ENCODE measurements at regions of chr4 and their contacts with region 1.

Region 1: GRCh38 chr4:136713140-136713539 is 819.2 kb downstream of the PCDH18 start:
- DNase-seq: no peak
- ATAC-seq: peak in 1 of 8 donors; percentile 50
- H3K4me3 ChIP-seq: peak overlapping the region in 2 of 10 donors; percentile 1 to 24
- H3K27ac ChIP-seq: no peak overlapping the region
- H3K4me1 ChIP-seq: no peaks in the 10 kb centered on the region
- H3K27me3 ChIP-seq: no peaks in the 10 kb centered on the region
- CTCF ChIP-seq: peak in 5 of 9 donors; percentile 11 to 27 (median 20)

Region 2: GRCh38 chr4:136400829-136401228 is 312.3 kb before region 1 on chr4:
- intact Hi-C with region 1: no loop called
- DNase-seq: no peak
- ATAC-seq: no peak
- H3K4me3 ChIP-seq: no peak overlapping the region
- H3K27ac ChIP-seq: no peak overlapping the region
- H3K4me1 ChIP-seq: no peaks in the 10 kb centered on the region
- H3K27me3 ChIP-seq: no peaks in the 10 kb centered on the region
- CTCF ChIP-seq: no peak

Region 3: DNA sequence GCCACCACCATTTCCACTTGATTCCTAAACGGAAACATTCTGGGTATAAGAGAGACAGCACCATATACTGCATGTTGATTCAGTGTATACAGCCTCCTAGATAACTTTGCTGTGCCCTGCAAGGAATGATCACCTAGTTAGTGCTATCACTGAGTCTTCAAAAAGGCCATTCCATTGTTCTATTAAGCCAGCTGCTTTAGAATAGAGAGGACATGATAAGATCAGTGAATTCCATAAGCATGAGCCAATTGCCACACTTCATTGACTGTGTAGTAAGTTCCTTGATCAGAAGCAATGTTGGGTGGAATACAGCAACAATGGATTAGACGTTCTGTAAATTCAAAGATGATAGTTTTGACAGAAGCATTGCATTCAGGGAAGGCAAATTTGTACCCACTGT is 228.1 kb before region 1 on chr4:
- intact Hi-C with region 1: no loop called
- DNase-seq: no peak
- ATAC-seq: no peak
- H3K4me3 ChIP-seq: no peak overlapping the region
- H3K27ac ChIP-seq: no peak overlapping the region
- H3K4me1 ChIP-seq: no peaks in the 10 kb centered on the region
- H3K27me3 ChIP-seq: no peaks in the 10 kb centered on the region
- CTCF ChIP-seq: no peak

Region 4: DNA sequence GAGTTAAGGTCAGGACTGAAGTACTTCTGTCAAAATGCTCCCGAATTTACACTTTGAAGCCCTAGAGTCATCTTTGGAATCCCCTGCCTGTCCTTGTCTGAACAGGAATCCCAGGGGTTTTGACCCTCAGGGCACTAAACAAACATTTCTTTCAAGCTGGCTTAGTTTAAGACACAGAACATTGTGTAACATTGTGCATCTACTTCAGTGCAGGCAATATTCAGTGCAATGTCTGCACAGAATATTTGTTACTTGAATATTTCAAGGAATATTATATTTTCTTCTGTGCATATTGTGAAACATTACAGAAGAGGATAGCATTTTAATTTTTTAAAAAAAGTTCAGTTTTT is 55.8 kb after region 1 on chr4:
- intact Hi-C with region 1: no loop called
- DNase-seq: no peak
- ATAC-seq: no peak
- H3K4me3 ChIP-seq: no peak overlapping the region
- H3K27ac ChIP-seq: no peak overlapping the region
- H3K4me1 ChIP-seq: no peaks in the 10 kb centered on the region
- H3K27me3 ChIP-seq: no peaks in the 10 kb centered on the region
- CTCF ChIP-seq: no peak

Region 5: DNA sequence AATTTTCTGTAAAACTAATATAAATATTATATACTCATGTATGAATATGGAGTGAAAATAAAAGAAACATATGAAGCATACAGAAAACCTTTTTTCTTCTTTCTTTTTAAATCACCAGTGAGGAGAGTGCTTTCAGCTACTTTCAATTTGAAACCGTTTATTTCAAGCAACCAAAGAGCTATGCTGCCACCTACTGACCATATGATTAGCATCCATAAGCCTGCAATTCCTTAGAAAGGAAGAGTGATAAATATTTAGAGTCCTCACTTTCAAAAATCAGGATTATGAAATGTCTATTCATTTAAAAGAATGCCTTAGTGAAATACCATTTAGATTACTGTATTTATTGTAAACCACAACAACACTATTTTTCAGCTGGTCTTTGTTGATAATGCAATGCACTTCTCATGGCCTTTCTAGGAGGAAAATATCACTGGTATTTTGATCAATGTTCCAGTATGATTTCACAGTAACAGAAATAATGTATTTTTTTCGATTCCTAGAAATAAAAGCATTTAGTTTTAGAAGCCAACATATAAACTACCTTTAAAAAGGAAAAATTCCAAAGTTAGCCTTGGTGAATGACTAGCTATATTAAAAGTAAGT is 151.5 kb after region 1 on chr4:
- intact Hi-C with region 1: loop called in 2 of 10 experiments (anchors 5 to 10 kb)
- DNase-seq: peak in 1 of 2 donors; percentile 44
- ATAC-seq: peak in 4 of 8 donors; percentile 48 to 75 (median 57)
- H3K4me3 ChIP-seq: no peak overlapping the region
- H3K27ac ChIP-seq: no peak overlapping the region
- H3K4me1 ChIP-seq: peaks cover 0 to 9% (median 0%) of the 10 kb centered on the region in 9 donors
- H3K27me3 ChIP-seq: no peaks in the 10 kb centered on the region
- CTCF ChIP-seq: peak; percentile 37 to 83 (median 75)

Measured in heart right ventricle (tissue), 16 donors.